Activated T-helper 2 cell treated with anti-CD3 and anti-CD28 coated beads, Interferon-gamma antibody, Interleukin-2, Interleukin-4, amounts not matched to agents 10 μg/mL and 5 μg/mL and 100 μg/mL, durations not matched to agents 14 hours and 24 hours and 36 hours (primary cell): ENCODE measurements at regions of chr1 and their contacts with region 1.

Region 1: DNA sequence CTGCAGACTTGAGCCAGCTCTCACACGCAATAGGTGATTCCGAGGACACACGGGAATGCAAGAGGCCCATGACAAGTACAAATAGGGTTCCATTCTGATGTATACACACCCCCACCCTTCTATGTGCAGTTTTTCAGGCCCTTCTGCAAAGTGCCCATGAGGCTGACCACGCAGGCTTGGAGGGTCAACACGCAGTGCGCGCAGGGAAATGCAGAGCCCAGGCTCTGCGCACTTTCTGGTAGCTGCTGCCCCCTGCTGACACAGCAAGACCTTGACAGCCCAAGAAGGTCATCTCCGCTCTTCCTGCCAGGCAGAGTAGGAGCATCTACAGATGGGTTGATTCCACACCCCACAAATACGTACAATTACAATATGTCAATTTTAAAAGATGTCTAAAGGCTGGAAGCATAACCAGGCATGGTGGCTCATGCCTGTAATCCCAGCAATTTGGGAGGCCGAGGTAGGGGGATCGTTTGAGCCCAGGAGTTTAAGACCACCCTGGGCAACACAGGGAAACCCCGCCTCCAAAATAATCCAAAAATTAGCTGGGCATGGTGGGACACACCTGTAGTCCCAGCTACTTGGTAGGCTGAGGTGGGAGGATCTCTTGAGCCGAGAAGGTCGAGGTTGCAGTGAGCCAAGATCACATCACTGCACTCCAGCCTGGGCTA is 18.5 kb downstream of the SH3BP5L start:
- DNase-seq: peak; percentile 24
- H3K4me3 Mint-ChIP-seq: no peak overlapping the region
- H3K27ac Mint-ChIP-seq: no peak overlapping the region
- H3K4me1 Mint-ChIP-seq: no peaks in the 10 kb centered on the region
- H3K27me3 Mint-ChIP-seq: no peaks in the 10 kb centered on the region

Region 2: GRCh38 chr1:248622570-248623001 is 184.6 kb before region 1 on chr1:
- intact Hi-C with region 1: loop called (anchors 1 kb)
- DNase-seq: no peak
- H3K4me3 Mint-ChIP-seq: no peak overlapping the region
- H3K27ac Mint-ChIP-seq: no peak overlapping the region
- H3K4me1 Mint-ChIP-seq: peaks cover 9% of the 10 kb centered on the region
- H3K27me3 Mint-ChIP-seq: no peaks in the 10 kb centered on the region

Region 3: GRCh38 chr1:248686815-248687214 is 120.4 kb before region 1 on chr1:
- intact Hi-C with region 1: loop called (anchors 2 kb)
- DNase-seq: no peak
- H3K4me3 Mint-ChIP-seq: no peak overlapping the region
- H3K27ac Mint-ChIP-seq: no peak overlapping the region
- H3K4me1 Mint-ChIP-seq: peaks cover 4% of the 10 kb centered on the region
- H3K27me3 Mint-ChIP-seq: peaks cover 3% of the 10 kb centered on the region